ENCODE measurements at regions of chr1 and their contacts with region 1.

Region 1: GRCh38 chr1:101190441-101190840 is 46.4 kb upstream of the S1PR1 start:
- DNase-seq: no peak
- ATAC-seq: peak; percentile 26 to 63 (median 38)
- H3K4me3 ChIP-seq: no peak overlapping the region
- H3K27ac ChIP-seq: peak overlapping the region in 5 of 12 donors; percentile 14 to 58 (median 29)
- H3K4me1 ChIP-seq: peaks cover 0 to 43% (median 4%) of the 10 kb centered on the region in 12 donors
- H3K27me3 ChIP-seq: no peaks in the 10 kb centered on the region
- CTCF ChIP-seq: no peak
- POLR2A ChIP-seq: no peak

Region 2: GRCh38 chr1:101233467-101233866 is 43.0 kb after region 1 on chr1:
- intact Hi-C with region 1: loop called in 1 of 10 experiments (anchors 5 kb)
- DNase-seq: no peak
- ATAC-seq: no peak
- H3K4me3 ChIP-seq: no peak overlapping the region
- H3K27ac ChIP-seq: peak overlapping the region in 4 of 12 donors; percentile 3 to 91 (median 8)
- H3K4me1 ChIP-seq: peaks cover 0 to 31% (median 12%) of the 10 kb centered on the region in 12 donors
- H3K27me3 ChIP-seq: no peaks in the 10 kb centered on the region
- CTCF ChIP-seq: no peak
- POLR2A ChIP-seq: no peak